Activated CD8-positive, alpha-beta T cell treated with anti-CD3 and anti-CD28 coated beads, Interleukin-2, amount 10 ng/mL, durations not matched to agents 7 days and 5 days (primary cell): ENCODE measurements at regions of chr1 and their contacts with region 1.

Region 1: DNA sequence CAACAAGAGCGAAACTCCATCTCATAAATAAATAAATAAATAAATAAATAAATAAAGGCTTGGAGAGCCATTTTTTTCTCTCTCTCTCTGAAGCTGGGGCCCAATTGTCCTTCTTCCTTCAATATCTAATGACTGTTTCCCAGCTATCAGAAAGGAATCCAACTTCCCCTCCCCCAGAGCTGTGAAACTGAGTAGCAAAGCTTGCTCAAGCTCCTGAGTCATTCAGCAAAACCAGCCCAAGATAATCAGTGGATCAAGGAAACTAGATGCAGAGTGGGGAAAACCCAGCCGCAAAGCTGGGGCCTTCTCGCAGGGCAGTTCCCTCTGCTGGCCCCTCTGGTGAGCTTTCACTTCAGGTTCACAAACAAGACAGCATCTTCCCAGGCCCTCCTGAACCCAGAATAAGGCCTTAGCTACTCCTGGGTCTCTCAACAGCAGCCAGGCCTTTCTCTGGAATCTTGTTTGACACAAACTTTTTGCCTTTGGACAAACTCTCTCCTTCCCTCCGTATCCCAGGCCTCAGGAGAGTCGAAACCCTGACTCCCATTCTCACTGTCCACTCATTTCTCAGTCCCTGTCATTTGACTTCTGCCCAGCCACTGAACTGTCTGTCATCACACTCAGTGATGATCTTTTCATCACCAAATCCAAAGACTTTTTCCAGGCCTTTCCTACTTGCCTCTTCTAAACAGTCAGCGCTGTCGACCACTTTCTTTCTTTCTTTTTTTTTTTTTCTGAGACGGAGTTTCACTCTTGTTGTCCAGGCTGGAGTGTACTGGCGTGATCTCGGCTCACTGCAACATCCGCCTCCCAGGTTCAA is 18.0 kb upstream of the PTP4A2 start:
- DNase-seq: peak; percentile 81
- ATAC-seq: peak; percentile 81
- H3K4me3 Mint-ChIP-seq: peak overlapping the region; percentile 48
- H3K27ac Mint-ChIP-seq: peak overlapping the region; percentile 88
- H3K4me1 Mint-ChIP-seq: peaks cover 83% of the 10 kb centered on the region
- H3K27me3 Mint-ChIP-seq: no peaks in the 10 kb centered on the region

Region 2: GRCh38 chr1:31910933-31911332 is 45.2 kb before region 1 on chr1:
- CTCF ChIA-PET with region 1: interaction called, 85 read pairs
- POLR2A ChIA-PET with region 1: interaction called, 3 read pairs
- DNase-seq: no peak
- ATAC-seq: no peak
- H3K4me3 Mint-ChIP-seq: no peak overlapping the region
- H3K27ac Mint-ChIP-seq: peak overlapping the region; percentile 33
- H3K4me1 Mint-ChIP-seq: peaks cover 48% of the 10 kb centered on the region
- H3K27me3 Mint-ChIP-seq: no peaks in the 10 kb centered on the region

Region 3: GRCh38 chr1:31923901-31924535 is 32.1 kb before region 1 on chr1:
- CTCF ChIA-PET with region 1: interaction called, 13 read pairs
- POLR2A ChIA-PET with region 1: interaction called, 8 read pairs
- DNase-seq: no peak
- ATAC-seq: no peak
- H3K4me3 Mint-ChIP-seq: peak overlapping the region; percentile 37
- H3K27ac Mint-ChIP-seq: peak overlapping the region; percentile 81
- H3K4me1 Mint-ChIP-seq: peaks cover 78% of the 10 kb centered on the region
- H3K27me3 Mint-ChIP-seq: no peaks in the 10 kb centered on the region

Region 4: DNA sequence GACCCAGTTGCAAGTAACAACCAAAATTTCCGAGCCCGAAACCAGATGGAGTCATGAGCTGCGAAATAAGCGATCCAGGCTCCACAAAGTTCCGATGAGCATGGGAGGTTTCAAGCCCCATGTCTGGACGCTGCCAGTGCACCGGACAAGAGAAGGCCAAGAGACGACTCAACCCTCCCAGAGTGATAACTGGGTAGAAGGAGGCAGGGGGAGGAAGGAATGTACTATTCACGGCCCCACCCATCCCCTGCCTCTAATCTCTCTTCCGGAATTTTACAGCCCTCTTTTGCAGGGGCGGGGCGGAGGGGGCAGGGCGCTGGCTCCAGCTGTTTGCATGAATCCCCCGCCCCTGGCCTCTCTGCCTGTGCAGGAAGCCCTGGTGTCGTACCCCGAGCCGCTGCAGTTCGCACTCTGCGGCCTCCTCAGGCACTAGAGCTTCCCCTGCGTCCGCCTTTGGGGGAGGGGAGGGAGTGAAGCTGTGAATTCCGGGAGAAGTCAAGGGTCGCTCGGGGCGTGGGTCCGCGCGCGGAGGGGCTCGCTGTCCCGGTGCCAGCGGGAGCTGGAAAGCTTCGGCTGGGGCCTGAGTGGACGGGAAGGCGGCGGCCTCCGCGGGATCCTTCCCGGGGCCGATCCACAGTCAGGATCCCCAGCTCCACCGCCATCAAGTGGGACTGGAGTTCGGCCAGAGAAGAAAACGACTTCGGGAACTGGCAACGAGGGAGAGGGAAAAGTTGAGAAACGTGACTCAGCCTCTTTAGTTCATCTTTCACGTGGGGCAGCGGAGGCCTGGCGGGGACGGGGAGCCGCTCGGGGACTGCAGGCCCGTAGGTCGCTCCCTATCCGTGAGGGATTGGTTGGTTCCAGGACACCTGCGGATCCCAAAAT is 11.7 kb before region 1 on chr1:
- CTCF ChIA-PET with region 1: interaction called, 664 read pairs
- POLR2A ChIA-PET with region 1: interaction called, 157 read pairs
- DNase-seq: peak; percentile 97
- ATAC-seq: peak; percentile 71
- H3K4me3 Mint-ChIP-seq: peak overlapping the region; percentile 77
- H3K27ac Mint-ChIP-seq: peak overlapping the region; percentile 95
- H3K4me1 Mint-ChIP-seq: peaks cover 66% of the 10 kb centered on the region
- H3K27me3 Mint-ChIP-seq: no peaks in the 10 kb centered on the region

Region 5: GRCh38 chr1:32221980-32222755 is 266.0 kb after region 1 on chr1 and contains the starts of genes EIF3I and TMEM234:
- CTCF ChIA-PET with region 1: no interaction called
- POLR2A ChIA-PET with region 1: no interaction called
- DNase-seq: peak; percentile 96
- ATAC-seq: peak; percentile 86
- H3K4me3 Mint-ChIP-seq: peak within 1 kb of the TSS; percentile 97
- H3K27ac Mint-ChIP-seq: peak within 1 kb of the TSS; percentile 98
- H3K4me1 Mint-ChIP-seq: peaks cover 31% of the 10 kb centered on the region
- H3K27me3 Mint-ChIP-seq: no peaks in the 10 kb centered on the region
- total RNA-seq, gene EIF3I: 194 to 196 TPM
- total RNA-seq, gene TMEM234: 10.6 TPM